ENCODE measurements at regions of chr1 and their contacts with region 1.

Region 1: DNA sequence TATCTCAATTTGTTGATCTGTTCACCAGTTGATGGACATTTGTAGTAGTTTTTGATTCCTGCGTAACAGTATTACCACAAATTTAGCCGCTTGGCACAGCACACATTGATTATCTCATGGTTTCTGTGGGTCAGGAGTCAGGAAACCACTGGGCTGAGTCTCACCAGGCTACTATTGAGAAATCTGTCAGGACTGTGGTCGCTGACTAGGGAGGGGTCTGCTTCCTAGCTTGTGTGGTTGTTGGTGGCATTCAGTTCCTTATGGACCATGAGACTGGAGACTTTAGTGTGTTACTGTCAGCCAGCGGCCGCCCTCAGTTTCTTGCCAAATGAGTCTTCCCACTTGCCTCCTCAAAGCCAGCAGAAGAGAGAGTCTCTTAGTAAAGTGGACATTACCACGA is 9.8 kb downstream of the PEX14 start:
- DNase-seq: no peak
- ATAC-seq: no peak
- H3K4me3 ChIP-seq: no peak overlapping the region
- H3K4me3 Mint-ChIP-seq: no peak overlapping the region
- H3K27ac ChIP-seq: no peak overlapping the region
- H3K27ac Mint-ChIP-seq: no peak overlapping the region
- H3K4me1 ChIP-seq: no peaks in the 10 kb centered on the region
- H3K4me1 Mint-ChIP-seq: peaks cover 11 to 19% (median 18%) of the 10 kb centered on the region in 3 donors
- H3K27me3 ChIP-seq: no peaks in the 10 kb centered on the region
- H3K27me3 Mint-ChIP-seq: no peaks in the 10 kb centered on the region

Region 2: GRCh38 chr1:10472220-10473144 is 12.0 kb before region 1 on chr1 and contains the start of gene DFFA:
- CTCF ChIA-PET with region 1: no interaction called
- POLR2A ChIA-PET with region 1: interaction called in 1 of 2 experiments, 12 read pairs
- DNase-seq: peak; percentile 77 to 96 (median 90)
- ATAC-seq: peak; percentile 86 to 90 (median 87)
- H3K4me3 ChIP-seq: peak within 1 kb of the TSS; percentile 49 to 79
- H3K4me3 Mint-ChIP-seq: peak within 1 kb of the TSS; percentile 92 to 99 (median 94)
- H3K27ac ChIP-seq: peak within 1 kb of the TSS; percentile 37
- H3K27ac Mint-ChIP-seq: peak within 1 kb of the TSS; percentile 85 to 93
- H3K4me1 ChIP-seq: peaks cover 15 to 43% of the 10 kb centered on the region in 2 experiments
- H3K4me1 Mint-ChIP-seq: peaks cover 44 to 54% (median 45%) of the 10 kb centered on the region in 3 donors
- H3K27me3 ChIP-seq: no peaks in the 10 kb centered on the region
- H3K27me3 Mint-ChIP-seq: no peaks in the 10 kb centered on the region
- total RNA-seq, gene DFFA: 19.3 to 32.9 (median 26.0) TPM